ENCODE measurements at regions of chr1 and their contacts with region 1.

Region 1: GRCh38 chr1:19240673-19241538 is 10.4 kb downstream of the EMC1 start:
- DNase-seq: no peak
- H3K4me3 ChIP-seq: no peak overlapping the region
- CTCF ChIP-seq: peak; percentile 93

Region 2: DNA sequence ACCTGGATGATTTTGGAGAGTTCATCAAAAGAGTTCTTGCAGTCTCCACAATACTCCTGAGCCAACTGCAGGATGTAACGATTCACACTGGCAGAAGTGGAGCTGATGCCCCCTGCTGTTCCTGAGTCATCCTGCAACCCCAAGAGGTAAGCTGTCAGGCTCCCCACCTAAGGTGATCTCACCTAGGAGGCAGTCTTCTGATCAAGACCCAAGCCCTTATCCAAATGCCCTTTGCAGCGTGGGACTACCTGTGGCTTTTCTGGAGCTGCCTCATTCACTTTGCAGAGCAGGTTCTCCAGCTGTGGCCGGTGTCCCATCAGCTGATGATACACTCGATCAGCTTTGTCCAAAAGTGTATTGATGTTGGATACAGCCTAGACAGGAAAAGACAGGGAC is 127.2 kb before region 1 on chr1:
- CTCF ChIA-PET with region 1: no interaction called
- POLR2A ChIA-PET with region 1: no interaction called
- DNase-seq: no peak
- H3K4me3 ChIP-seq: no peak overlapping the region
- CTCF ChIP-seq: peak; percentile 64

Region 3: DNA sequence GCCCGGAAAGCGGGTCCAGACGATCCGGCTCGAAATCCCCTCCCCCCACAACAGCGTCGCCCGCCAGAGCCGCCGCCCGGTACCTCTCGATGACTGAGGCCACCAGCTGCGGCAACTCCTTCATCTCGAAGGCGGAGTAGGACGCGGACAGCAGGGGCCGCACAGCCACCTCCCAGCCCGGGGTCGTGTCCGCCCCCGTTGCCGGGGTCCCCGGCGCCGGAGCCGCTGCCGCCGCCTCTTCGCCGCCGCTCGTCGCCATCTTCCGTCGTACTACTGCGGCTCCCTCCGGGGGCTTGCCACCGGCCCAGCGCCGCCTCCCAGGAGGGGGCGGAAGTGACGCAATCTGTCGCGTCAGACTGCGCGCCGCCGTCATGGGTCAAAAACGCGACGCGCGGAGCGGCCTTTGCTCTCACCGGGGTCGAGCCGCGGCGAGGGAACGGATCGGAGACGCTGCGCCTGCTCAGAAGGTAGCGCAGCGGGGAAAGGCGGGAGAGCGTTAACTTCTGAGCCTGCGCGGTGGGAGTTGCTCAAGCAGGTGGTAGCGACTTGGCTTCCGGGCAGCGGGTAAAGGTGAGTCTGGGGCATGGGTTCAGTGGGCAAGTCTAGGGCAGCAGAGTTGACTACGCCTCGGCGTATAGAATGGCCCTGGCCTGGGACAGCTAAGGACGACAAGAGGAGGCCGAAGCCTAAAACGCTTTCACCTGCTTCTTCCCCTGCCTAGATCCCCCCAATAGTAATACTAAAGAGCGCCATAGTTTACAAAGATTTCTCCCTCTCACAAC is 30.7 kb before region 1 on chr1 and contains the start of gene UBR4:
- CTCF ChIA-PET with region 1: interaction called, 17 read pairs
- POLR2A ChIA-PET with region 1: no interaction called
- DNase-seq: peak; percentile 52
- H3K4me3 ChIP-seq: peak within 1 kb of the TSS; percentile 97
- CTCF ChIP-seq: no peak

Region 4: GRCh38 chr1:19222979-19223824 is 17.7 kb before region 1 on chr1:
- CTCF ChIA-PET with region 1: interaction called, 56 read pairs
- POLR2A ChIA-PET with region 1: interaction called, 3 read pairs
- DNase-seq: no peak
- H3K4me3 ChIP-seq: no peak overlapping the region
- CTCF ChIP-seq: no peak

Region 5: GRCh38 chr1:19251305-19252196 is 10.6 kb after region 1 on chr1 and contains the starts of genes EMC1 and MRTO4:
- CTCF ChIA-PET with region 1: interaction called, 48 read pairs
- POLR2A ChIA-PET with region 1: interaction called, 7 read pairs
- DNase-seq: no peak
- H3K4me3 ChIP-seq: peak within 1 kb of the TSS; percentile 69
- CTCF ChIP-seq: no peak

Region 6: DNA sequence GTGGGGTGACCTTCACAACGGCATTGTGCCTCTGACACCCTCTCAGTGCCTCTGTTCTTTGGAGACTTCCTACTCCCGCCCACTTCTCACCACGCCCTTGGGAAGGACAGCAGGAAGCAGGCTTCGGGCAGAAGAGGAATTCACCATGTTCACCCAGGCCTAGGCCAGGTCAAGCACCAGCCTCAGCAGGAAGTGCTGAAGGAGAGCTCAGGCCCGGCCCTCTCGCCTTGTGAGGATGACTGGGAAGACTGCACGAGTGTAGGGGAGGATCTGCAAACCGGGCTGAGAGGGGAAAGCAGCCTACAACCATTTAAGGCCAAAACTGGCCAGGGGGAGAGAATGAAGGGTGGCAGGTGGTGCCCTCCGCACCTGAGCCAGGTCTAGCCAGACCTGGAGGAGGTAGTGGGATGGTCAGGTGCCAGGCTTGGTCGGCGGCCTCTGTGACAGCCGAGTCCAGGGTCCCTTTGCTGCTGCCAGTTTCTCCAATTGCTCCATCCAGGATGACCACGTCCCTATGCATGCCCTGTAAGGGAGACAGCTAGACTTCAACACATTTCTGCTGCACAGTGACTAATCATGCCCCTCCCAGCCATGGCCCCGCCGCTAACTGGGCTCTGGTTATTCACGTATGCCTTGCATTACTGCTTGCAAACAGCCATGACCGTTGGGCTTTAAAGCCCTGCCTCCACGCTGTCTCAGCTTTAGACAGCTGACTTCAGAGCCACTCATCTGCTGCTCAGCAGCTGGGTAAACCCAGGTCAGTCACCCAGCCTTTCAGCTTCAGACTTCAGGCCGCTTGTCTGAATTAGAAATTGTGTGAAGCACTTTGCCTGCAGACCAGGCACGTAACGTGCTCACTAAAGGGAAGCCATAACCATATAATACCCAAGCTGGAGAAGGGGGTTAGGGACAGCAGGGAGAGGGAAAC is 19.6 kb after region 1 on chr1:
- CTCF ChIA-PET with region 1: interaction called, 30 read pairs
- POLR2A ChIA-PET with region 1: no interaction called
- DNase-seq: peak; percentile 86
- H3K4me3 ChIP-seq: no peak overlapping the region
- CTCF ChIP-seq: no peak

Measured in AG04449 (cell line).